ENCODE measurements at regions of chr18 and their contacts with region 1.

Region 1: DNA sequence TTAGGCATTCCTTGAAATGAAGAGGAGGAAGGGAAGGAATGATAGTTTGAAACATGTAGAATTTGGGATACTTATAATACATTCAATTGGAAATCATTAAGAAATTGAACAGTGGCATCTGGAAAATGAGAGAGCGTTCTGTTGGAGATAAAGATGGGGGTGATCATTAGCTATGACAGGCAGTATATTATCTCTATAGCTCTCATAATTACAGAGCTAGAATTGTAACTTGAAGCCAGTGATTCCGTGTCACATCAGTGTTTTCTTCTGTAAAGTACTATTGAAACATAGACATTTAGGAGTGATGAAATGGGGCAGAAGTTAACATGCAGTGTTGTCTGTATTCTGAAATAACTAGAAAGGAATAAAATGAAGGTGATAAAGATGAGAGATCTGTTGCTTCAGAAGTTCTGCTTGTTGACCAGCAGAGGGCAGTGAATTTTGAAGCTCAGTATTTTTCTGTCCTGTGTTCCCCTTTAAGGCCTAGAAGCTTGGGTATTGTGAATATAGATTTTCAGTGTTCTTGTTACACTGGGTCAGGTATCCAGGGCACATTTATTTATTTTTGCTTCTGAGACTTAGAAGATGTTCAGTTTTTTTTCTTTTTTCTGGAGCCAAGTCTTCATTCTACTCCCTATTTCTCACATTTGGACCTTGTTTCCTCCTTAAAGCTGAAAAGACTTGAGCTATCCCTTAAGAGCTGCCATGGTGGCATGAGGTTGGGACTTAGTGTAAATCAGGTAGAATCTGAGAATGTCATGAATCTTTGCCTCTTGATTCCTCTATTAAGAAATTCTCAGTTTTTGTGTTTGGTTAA is 157.4 kb downstream of the TAF4B start:
- DNase-seq: no peak
- ATAC-seq: peak in 3 of 8 donors; percentile 47 to 56 (median 49)
- H3K4me3 ChIP-seq: no peak overlapping the region
- H3K27ac ChIP-seq: no peak overlapping the region
- H3K4me1 ChIP-seq: peaks cover 0 to 21% (median 10%) of the 10 kb centered on the region in 9 donors
- H3K27me3 ChIP-seq: no peaks in the 10 kb centered on the region
- CTCF ChIP-seq: peak; percentile 58 to 85 (median 77)

Region 2: DNA sequence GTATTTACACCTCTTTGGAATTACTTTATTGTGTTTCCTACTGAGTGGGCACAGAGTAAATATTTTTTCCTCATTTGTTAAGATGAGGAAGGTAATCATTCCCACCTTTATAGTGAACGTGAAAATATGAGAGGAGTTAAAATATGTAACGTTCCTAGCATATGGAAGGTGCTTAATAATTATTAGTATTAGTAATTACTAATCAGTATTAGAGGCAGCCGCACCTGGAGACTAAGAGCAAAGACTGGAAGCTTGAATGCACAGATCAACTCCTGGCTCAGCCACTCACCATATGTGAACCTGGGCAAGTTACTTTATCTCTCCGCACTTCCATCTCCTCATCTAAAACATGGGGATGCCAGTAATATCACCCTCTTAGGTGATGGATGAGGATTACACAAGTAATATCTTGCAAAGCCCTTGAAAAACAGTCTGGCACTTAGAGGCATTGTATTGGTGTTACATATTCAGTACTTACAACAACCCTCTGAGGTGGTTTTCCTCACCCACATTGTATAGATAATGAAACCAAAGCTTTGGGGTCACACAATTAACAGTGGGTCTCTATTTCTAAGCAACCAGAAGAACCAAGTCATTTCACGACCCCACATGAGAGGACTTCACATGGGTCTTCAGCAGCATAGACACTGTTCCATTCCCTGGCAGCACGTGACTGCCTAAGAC is 265.0 kb after region 1 on chr18:
- intact Hi-C with region 1: loop called in 8 of 10 experiments (anchors 5 to 10 kb)
- DNase-seq: no peak
- ATAC-seq: no peak
- H3K4me3 ChIP-seq: no peak overlapping the region
- H3K27ac ChIP-seq: no peak overlapping the region
- H3K4me1 ChIP-seq: peaks cover 0 to 12% (median 0%) of the 10 kb centered on the region in 9 donors
- H3K27me3 ChIP-seq: peaks cover 0 to 23% (median 0%) of the 10 kb centered on the region in 7 donors
- CTCF ChIP-seq: no peak